ENCODE measurements at regions of chr10 and their contacts with region 1.

Region 1: GRCh38 chr10:90871766-90872647 is at the start of gene RPP30:
- DNase-seq: peak; percentile 92
- ATAC-seq: peak; percentile 93
- H3K4me3 Mint-ChIP-seq: peak within 1 kb of the TSS; percentile 89
- H3K27ac Mint-ChIP-seq: peak within 1 kb of the TSS; percentile 98
- H3K4me1 Mint-ChIP-seq: peaks cover 34% of the 10 kb centered on the region
- H3K27me3 Mint-ChIP-seq: peaks cover 17% of the 10 kb centered on the region
- total RNA-seq, gene RPP30: 103 to 115 TPM

Region 2: GRCh38 chr10:89251409-89252224 is 1620.4 kb before region 1 on chr10 and contains the start of gene LIPA:
- CTCF ChIA-PET with region 1: no interaction called
- POLR2A ChIA-PET with region 1: interaction called, 3 read pairs
- intact Hi-C with region 1: loop called in 1 of 2 experiments (anchors 10 kb)
- DNase-seq: peak; percentile 96
- ATAC-seq: peak; percentile 96
- H3K4me3 Mint-ChIP-seq: peak within 1 kb of the TSS; percentile 80
- H3K27ac Mint-ChIP-seq: peak within 1 kb of the TSS; percentile 74
- H3K4me1 Mint-ChIP-seq: peaks cover 47% of the 10 kb centered on the region
- H3K27me3 Mint-ChIP-seq: peaks cover 2% of the 10 kb centered on the region
- total RNA-seq, gene LIPA: 17.0 to 22.1 TPM

Region 3: GRCh38 chr10:89701238-89702120 is 1170.5 kb before region 1 on chr10 and contains the start of gene KIF20B:
- CTCF ChIA-PET with region 1: no interaction called
- POLR2A ChIA-PET with region 1: no interaction called
- intact Hi-C with region 1: loop called in 1 of 2 experiments (anchors 1 kb)
- DNase-seq: peak; percentile 97
- ATAC-seq: peak; percentile 97
- H3K4me3 Mint-ChIP-seq: peak within 1 kb of the TSS; percentile 99
- H3K27ac Mint-ChIP-seq: peak within 1 kb of the TSS; percentile 98
- H3K4me1 Mint-ChIP-seq: peaks cover 41% of the 10 kb centered on the region
- H3K27me3 Mint-ChIP-seq: no peaks in the 10 kb centered on the region
- total RNA-seq, gene KIF20B: 74.6 to 86.2 TPM

Region 4: GRCh38 chr10:90227217-90227656 is 644.8 kb before region 1 on chr10:
- CTCF ChIA-PET with region 1: no interaction called
- POLR2A ChIA-PET with region 1: no interaction called
- intact Hi-C with region 1: loop called in 1 of 2 experiments (anchors 1 kb)
- DNase-seq: peak; percentile 79
- ATAC-seq: peak; percentile 94
- H3K4me3 Mint-ChIP-seq: no peak overlapping the region
- H3K27ac Mint-ChIP-seq: no peak overlapping the region
- H3K4me1 Mint-ChIP-seq: peaks cover 20% of the 10 kb centered on the region
- H3K27me3 Mint-ChIP-seq: peaks cover 35% of the 10 kb centered on the region

Region 5: DNA sequence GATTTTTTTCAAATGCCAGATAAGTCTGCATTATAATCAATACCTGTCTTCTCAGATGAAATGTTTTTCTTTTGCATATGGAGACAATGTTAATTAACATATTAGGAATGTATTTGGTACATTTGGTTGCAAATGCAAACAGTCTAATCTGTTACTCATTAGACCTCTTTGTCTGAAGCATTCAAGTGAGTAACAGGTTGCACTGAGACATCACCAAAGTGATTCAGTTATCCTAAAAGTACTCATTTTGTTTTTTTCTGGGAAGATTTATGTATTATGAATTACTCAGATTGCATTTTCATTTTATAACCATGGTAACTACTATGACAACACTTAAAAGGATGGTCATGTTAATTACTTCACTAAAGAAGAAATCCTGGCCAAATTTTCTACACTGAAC is 527.8 kb before region 1 on chr10:
- CTCF ChIA-PET with region 1: no interaction called
- POLR2A ChIA-PET with region 1: no interaction called
- intact Hi-C with region 1: no loop called
- DNase-seq: no peak
- ATAC-seq: no peak
- H3K4me3 Mint-ChIP-seq: no peak overlapping the region
- H3K27ac Mint-ChIP-seq: no peak overlapping the region
- H3K4me1 Mint-ChIP-seq: no peaks in the 10 kb centered on the region
- H3K27me3 Mint-ChIP-seq: peaks cover 8% of the 10 kb centered on the region

Region 6: GRCh38 chr10:90857635-90858460 is 14.2 kb before region 1 on chr10 and contains the start of gene HTR7:
- CTCF ChIA-PET with region 1: interaction called, 6 read pairs
- POLR2A ChIA-PET with region 1: interaction called, 5 read pairs
- intact Hi-C with region 1: loop called (anchors 1 kb)
- DNase-seq: peak; percentile 66
- ATAC-seq: peak; percentile 84
- H3K4me3 Mint-ChIP-seq: peak within 1 kb of the TSS; percentile 72
- H3K27ac Mint-ChIP-seq: no peak within 1 kb of the TSS
- H3K4me1 Mint-ChIP-seq: peaks cover 9% of the 10 kb centered on the region
- H3K27me3 Mint-ChIP-seq: peaks cover 50% of the 10 kb centered on the region
- total RNA-seq, gene HTR7: not detected

Region 7: GRCh38 chr10:91541481-91541880 is 669.5 kb after region 1 on chr10:
- CTCF ChIA-PET with region 1: no interaction called
- POLR2A ChIA-PET with region 1: no interaction called
- intact Hi-C with region 1: no loop called
- DNase-seq: no peak
- ATAC-seq: no peak
- H3K4me3 Mint-ChIP-seq: no peak overlapping the region
- H3K27ac Mint-ChIP-seq: no peak overlapping the region
- H3K4me1 Mint-ChIP-seq: no peaks in the 10 kb centered on the region
- H3K27me3 Mint-ChIP-seq: peaks cover 5% of the 10 kb centered on the region